ENCODE measurements at regions of chr15 and their contacts with region 1.

Region 1: GRCh38 chr15:73633111-73633990 is at the start of gene NPTN:
- DNase-seq: peak; percentile 98 to 99
- H3K4me3 ChIP-seq: peak within 1 kb of the TSS; percentile 85 to 99
- H3K27ac ChIP-seq: peak within 1 kb of the TSS; percentile 99
- H3K4me1 ChIP-seq: peaks cover 54% of the 10 kb centered on the region
- H3K27me3 ChIP-seq: no peaks in the 10 kb centered on the region
- CTCF ChIP-seq: no peak
- POLR2A ChIP-seq: peak in 1 of 2 donors; percentile 54
- total RNA-seq, gene NPTN: 139 TPM

Region 2: GRCh38 chr15:73573572-73573971 is 59.8 kb before region 1 on chr15:
- intact Hi-C with region 1: loop called (anchors 5 kb)
- DNase-seq: no peak
- H3K4me3 ChIP-seq: no peak overlapping the region
- H3K27ac ChIP-seq: no peak overlapping the region
- H3K4me1 ChIP-seq: peaks cover 46% of the 10 kb centered on the region
- H3K27me3 ChIP-seq: no peaks in the 10 kb centered on the region
- CTCF ChIP-seq: no peak
- POLR2A ChIP-seq: no peak

Region 3: GRCh38 chr15:73694419-73694818 is 61.1 kb after region 1 on chr15:
- intact Hi-C with region 1: loop called (anchors 2 kb)
- DNase-seq: no peak
- H3K4me3 ChIP-seq: no peak overlapping the region
- H3K27ac ChIP-seq: no peak overlapping the region
- H3K4me1 ChIP-seq: peaks cover 74% of the 10 kb centered on the region
- H3K27me3 ChIP-seq: no peaks in the 10 kb centered on the region
- CTCF ChIP-seq: no peak
- POLR2A ChIP-seq: no peak

Region 4: GRCh38 chr15:73700041-73700842 is 66.9 kb after region 1 on chr15:
- intact Hi-C with region 1: loop called (anchors 2 kb)
- DNase-seq: no peak
- H3K4me3 ChIP-seq: no peak overlapping the region
- H3K27ac ChIP-seq: no peak overlapping the region
- H3K4me1 ChIP-seq: peaks cover 28% of the 10 kb centered on the region
- H3K27me3 ChIP-seq: no peaks in the 10 kb centered on the region
- CTCF ChIP-seq: peak; percentile 91 to 93 (median 92)
- POLR2A ChIP-seq: no peak

Measured in vagina (tissue), 2 donors.